T-cell (primary cell): ENCODE measurements at regions of chr12 and their contacts with region 1.

Region 1: GRCh38 chr12:111546758-111547383 is 52.2 kb downstream of the ATXN2 start:
- DNase-seq: peak in 1 of 35 experiments; percentile 36
- ATAC-seq: peak in 2 of 4 experiments; percentile 32 to 64
- H3K4me3 ChIP-seq: no peak overlapping the region
- H3K4me3 Mint-ChIP-seq: no peak overlapping the region
- H3K27ac ChIP-seq: peak overlapping the region; percentile 14
- H3K27ac Mint-ChIP-seq: peak overlapping the region; percentile 16 to 29
- H3K4me1 ChIP-seq: no peaks in the 10 kb centered on the region
- H3K4me1 Mint-ChIP-seq: peaks cover 11 to 12% (median 11%) of the 10 kb centered on the region in 3 donors
- H3K27me3 ChIP-seq: no peaks in the 10 kb centered on the region
- H3K27me3 Mint-ChIP-seq: no peaks in the 10 kb centered on the region

Region 2: GRCh38 chr12:112046003-112046402 is 499.1 kb after region 1 on chr12:
- CTCF ChIA-PET with region 1: no interaction called
- POLR2A ChIA-PET with region 1: no interaction called
- DNase-seq: no peak
- ATAC-seq: no peak
- H3K4me3 ChIP-seq: no peak overlapping the region
- H3K4me3 Mint-ChIP-seq: no peak overlapping the region
- H3K27ac ChIP-seq: no peak overlapping the region
- H3K27ac Mint-ChIP-seq: peak overlapping the region in 1 of 2 donors; percentile 11
- H3K4me1 ChIP-seq: no peaks in the 10 kb centered on the region
- H3K4me1 Mint-ChIP-seq: no peaks in the 10 kb centered on the region
- H3K27me3 ChIP-seq: no peaks in the 10 kb centered on the region
- H3K27me3 Mint-ChIP-seq: no peaks in the 10 kb centered on the region

Region 3: GRCh38 chr12:112418608-112419298 is 871.9 kb after region 1 on chr12 and contains the start of gene PTPN11:
- CTCF ChIA-PET with region 1: no interaction called
- POLR2A ChIA-PET with region 1: interaction called in 1 of 2 experiments, 12 read pairs
- DNase-seq: peak; percentile 69 to 93 (median 87)
- ATAC-seq: peak; percentile 87 to 93 (median 89)
- H3K4me3 ChIP-seq: peak within 1 kb of the TSS; percentile 86 to 88
- H3K4me3 Mint-ChIP-seq: peak within 1 kb of the TSS; percentile 92 to 100 (median 95)
- H3K27ac ChIP-seq: peak within 1 kb of the TSS; percentile 87
- H3K27ac Mint-ChIP-seq: peak within 1 kb of the TSS; percentile 91 to 94
- H3K4me1 ChIP-seq: peaks cover 8 to 28% of the 10 kb centered on the region in 2 experiments
- H3K4me1 Mint-ChIP-seq: peaks cover 43 to 53% (median 43%) of the 10 kb centered on the region in 3 donors
- H3K27me3 ChIP-seq: no peaks in the 10 kb centered on the region
- H3K27me3 Mint-ChIP-seq: no peaks in the 10 kb centered on the region
- total RNA-seq, gene PTPN11: 48.7 to 55.5 (median 53.2) TPM